Right ventricle myocardium inferior (tissue), 1 donor: ENCODE measurements at regions of chr3 and their contacts with region 1.

Region 1: DNA sequence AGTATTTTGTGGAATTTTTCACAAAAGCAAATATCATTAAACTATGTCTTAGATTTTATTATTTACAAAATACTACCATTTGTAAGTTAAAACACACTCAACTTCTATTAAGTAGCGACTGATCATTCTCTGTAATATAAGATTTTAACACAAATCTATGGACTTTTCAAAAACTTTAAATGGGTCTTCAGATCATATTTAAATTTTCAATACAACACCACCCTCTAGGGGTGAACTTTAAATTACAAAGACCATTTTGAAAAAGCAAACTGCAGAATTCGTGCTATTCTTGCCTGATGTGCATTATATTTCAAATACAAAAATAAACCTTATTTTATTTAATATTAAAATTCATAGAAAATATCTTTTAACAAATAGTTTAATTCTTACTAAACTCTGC is 8.2 kb upstream of the VGLL4 start:
- DNase-seq: no peak
- ATAC-seq: no peak

Region 2: DNA sequence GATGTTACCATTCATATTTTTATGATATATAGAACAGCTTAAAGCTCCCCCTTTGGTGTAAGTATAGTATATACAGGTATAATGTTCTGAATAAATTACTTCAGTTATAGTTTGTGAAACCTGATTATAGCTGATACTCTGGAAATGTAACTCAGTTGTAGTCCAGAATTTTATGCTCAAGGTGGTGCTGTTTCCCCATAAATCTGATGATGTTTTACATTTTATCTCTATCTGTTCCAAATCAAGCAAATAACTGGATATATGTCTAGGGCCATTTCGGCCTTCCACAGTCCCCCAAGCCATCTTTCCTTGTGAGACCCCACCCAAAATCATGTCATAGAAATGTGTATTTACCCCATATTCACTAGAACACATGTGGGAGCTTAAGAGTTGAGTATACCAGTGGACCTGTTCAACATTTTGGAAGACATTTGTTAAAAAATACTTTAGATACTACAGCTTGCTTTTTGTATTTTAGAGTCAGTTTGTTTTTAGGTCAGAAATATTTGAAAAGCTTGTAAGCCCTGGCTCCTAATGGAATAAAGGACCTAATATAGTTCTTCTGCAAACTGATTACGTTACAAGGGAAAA is 272.6 kb before region 1 on chr3:
- intact Hi-C with region 1: loop called (anchors 2 kb)
- DNase-seq: no peak
- ATAC-seq: peak; percentile 52

Region 3: DNA sequence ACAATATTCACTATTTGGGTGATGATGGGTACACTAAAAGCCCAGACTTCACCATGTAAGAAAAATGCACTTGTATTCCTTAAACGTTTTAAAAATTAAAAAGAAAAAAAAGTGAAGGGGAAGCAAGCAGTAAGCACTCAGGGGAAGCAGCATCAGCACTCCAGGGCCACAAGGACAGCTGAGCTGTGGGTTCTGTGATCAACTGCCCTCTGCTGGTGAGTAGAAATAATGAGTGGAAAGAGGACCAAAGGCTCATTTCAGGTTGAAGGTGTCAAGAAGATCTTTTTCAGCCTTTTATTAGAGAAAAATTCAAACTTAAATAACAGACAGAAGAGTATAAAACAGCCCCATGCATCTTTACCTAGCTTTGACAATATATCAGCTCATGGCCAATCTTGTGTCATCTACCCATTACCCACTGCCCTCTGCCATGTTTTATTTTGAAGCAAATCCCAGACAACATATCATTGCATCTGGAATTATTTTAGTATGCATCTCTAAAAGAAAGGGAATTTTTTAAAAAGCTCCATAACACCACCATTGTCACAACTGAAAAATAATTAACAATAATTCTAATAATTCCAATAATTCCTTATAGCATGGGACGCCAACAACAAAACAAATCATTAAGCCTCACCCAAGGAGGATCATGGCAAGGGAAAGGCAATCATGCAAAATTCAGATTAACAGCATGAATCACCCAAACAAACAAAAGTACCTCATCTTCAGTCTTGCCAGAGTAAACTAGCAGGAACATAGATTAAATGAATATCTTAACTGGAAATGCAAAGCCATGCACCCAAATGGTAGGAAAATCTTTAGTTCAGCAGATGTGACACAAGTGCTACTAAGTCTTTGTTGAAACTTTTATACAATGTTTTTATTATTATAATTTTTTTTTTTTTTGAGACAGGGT is 152.3 kb after region 1 on chr3:
- intact Hi-C with region 1: loop called (anchors 5 kb)
- DNase-seq: no peak
- ATAC-seq: no peak